Activated naive CD4-positive, alpha-beta T cell treated with anti-CD3 and anti-CD28 coated beads for 36 hours (primary cell): ENCODE measurements at regions of chr16 and their contacts with region 1.

Region 1: GRCh38 chr16:66740010-66740409 is 11.4 kb downstream of the DYNC1LI2 start:
- DNase-seq: peak; percentile 50
- H3K4me3 Mint-ChIP-seq: no peak overlapping the region
- H3K27ac Mint-ChIP-seq: no peak overlapping the region
- H3K4me1 Mint-ChIP-seq: peaks cover 12% of the 10 kb centered on the region
- H3K27me3 Mint-ChIP-seq: no peaks in the 10 kb centered on the region

Region 2: GRCh38 chr16:66660422-66661209 is 79.4 kb before region 1 on chr16:
- CTCF ChIA-PET with region 1: interaction called, 3 read pairs
- intact Hi-C with region 1: loop called (anchors 5 kb)
- DNase-seq: no peak
- H3K4me3 Mint-ChIP-seq: no peak overlapping the region
- H3K27ac Mint-ChIP-seq: no peak overlapping the region
- H3K4me1 Mint-ChIP-seq: peaks cover 3% of the 10 kb centered on the region
- H3K27me3 Mint-ChIP-seq: peaks cover 3% of the 10 kb centered on the region

Region 3: GRCh38 chr16:66728117-66728787 is 11.8 kb before region 1 on chr16:
- CTCF ChIA-PET with region 1: interaction called, 31 read pairs
- intact Hi-C with region 1: no loop called
- DNase-seq: peak; percentile 12
- H3K4me3 Mint-ChIP-seq: no peak overlapping the region
- H3K27ac Mint-ChIP-seq: no peak overlapping the region
- H3K4me1 Mint-ChIP-seq: no peaks in the 10 kb centered on the region
- H3K27me3 Mint-ChIP-seq: no peaks in the 10 kb centered on the region

Region 4: GRCh38 chr16:66751303-66751991 is 11.4 kb after region 1 on chr16 and contains the start of gene DYNC1LI2:
- CTCF ChIA-PET with region 1: interaction called, 22 read pairs
- intact Hi-C with region 1: no loop called
- DNase-seq: peak; percentile 82
- H3K4me3 Mint-ChIP-seq: peak within 1 kb of the TSS; percentile 88
- H3K27ac Mint-ChIP-seq: peak within 1 kb of the TSS; percentile 78
- H3K4me1 Mint-ChIP-seq: peaks cover 36% of the 10 kb centered on the region
- H3K27me3 Mint-ChIP-seq: peaks cover 3% of the 10 kb centered on the region
- total RNA-seq, gene DYNC1LI2: 30.8 to 31.0 TPM